Right cardiac atrium (tissue), 5 donors: ENCODE measurements at regions of chr10 and their contacts with region 1.

Region 1: DNA sequence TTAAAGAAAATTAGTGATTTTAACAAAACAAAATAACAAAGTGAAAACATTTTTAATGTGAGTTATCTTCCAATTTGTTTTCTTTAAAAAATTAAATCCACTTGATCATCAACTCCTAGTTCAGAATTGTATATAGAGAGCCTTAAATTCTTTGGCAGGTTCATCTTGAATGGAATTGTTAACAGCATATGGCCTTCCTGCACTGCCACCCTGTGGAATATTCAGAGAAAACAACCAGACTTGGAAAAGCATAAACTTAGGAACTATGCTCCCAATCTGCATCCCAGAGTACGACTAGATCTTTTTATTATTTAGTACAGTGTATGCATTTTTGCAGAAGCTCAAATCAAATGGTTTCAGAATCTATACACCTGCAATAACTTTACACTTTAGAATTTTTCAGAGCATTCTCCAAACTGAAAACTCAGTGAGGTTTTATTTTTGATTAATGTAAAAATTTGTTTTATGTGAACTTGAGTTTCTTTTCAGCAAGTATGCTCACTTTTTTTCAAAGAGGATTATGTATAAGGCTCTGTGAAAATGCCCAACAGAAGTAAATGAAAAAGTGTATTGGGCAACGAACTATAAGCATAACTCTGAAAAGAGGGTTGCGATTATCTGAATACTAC is 44.9 kb upstream of the ANK3 start:
- DNase-seq: no peak
- ATAC-seq: peak; percentile 67 to 72
- H3K4me3 ChIP-seq: no peak overlapping the region
- H3K27ac ChIP-seq: no peak overlapping the region
- H3K4me1 ChIP-seq: no peaks in the 10 kb centered on the region
- H3K27me3 ChIP-seq: no peaks in the 10 kb centered on the region

Region 2: GRCh38 chr10:60099998-60100747 is 334.4 kb before region 1 on chr10:
- intact Hi-C with region 1: loop called in 3 of 4 experiments (anchors 5 to 10 kb)
- DNase-seq: no peak
- ATAC-seq: peak; percentile 55 to 66
- H3K4me3 ChIP-seq: no peak overlapping the region
- H3K27ac ChIP-seq: no peak overlapping the region
- H3K4me1 ChIP-seq: no peaks in the 10 kb centered on the region
- H3K27me3 ChIP-seq: no peaks in the 10 kb centered on the region

Region 3: DNA sequence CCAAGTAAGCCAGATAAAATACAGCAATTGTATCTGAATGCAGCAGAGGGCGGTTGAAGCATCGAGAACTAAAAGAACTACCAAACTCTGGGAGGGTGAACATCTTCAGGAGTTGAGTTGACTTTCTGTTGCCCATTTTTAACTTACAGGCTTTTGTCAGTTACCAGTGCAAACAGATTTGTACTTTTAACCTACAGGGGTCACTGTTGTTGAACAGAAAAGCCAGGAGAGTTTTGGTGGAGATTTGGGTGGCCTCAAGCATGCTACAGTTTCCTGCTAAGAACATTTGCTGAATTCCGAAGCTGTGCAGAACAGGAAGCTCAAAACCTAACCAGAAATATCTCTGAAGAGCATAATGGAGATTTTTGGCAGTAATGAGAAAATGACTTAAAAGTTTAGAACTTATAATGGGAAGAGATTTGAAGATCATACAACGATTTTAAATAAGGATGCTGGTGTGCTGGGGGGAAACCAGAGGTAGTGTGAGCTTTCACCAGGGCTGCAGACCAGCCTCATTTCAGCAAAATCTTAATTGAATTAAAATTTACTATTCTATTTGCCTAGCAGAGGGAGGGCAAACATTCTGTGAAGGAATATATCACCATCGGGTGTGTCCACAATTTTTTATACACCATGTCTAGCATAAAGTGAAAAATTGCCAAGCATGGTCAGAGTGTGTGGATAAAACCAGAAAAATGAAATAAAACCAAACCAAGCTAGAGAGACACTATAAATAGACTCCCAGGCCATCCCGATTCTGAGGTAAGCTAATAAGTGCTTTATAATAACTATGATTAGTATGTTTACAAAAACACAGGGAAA is 319.6 kb before region 1 on chr10:
- intact Hi-C with region 1: loop called in 1 of 4 experiments (anchors 10 kb)
- DNase-seq: no peak
- ATAC-seq: peak; percentile 53 to 75
- H3K4me3 ChIP-seq: no peak overlapping the region
- H3K27ac ChIP-seq: no peak overlapping the region
- H3K4me1 ChIP-seq: no peaks in the 10 kb centered on the region
- H3K27me3 ChIP-seq: no peaks in the 10 kb centered on the region

Region 4: GRCh38 chr10:60208676-60209269 is 225.8 kb before region 1 on chr10:
- intact Hi-C with region 1: loop called (anchors 10 kb)
- DNase-seq: no peak
- ATAC-seq: peak in 1 of 2 donors; percentile 35
- H3K4me3 ChIP-seq: no peak overlapping the region
- H3K27ac ChIP-seq: no peak overlapping the region
- H3K4me1 ChIP-seq: no peaks in the 10 kb centered on the region
- H3K27me3 ChIP-seq: no peaks in the 10 kb centered on the region

Region 5: GRCh38 chr10:60237977-60238758 is 196.4 kb before region 1 on chr10:
- intact Hi-C with region 1: loop called in 1 of 4 experiments (anchors 10 kb)
- DNase-seq: no peak
- ATAC-seq: peak; percentile 68 to 77
- H3K4me3 ChIP-seq: no peak overlapping the region
- H3K27ac ChIP-seq: peak overlapping the region; percentile 54
- H3K4me1 ChIP-seq: peaks cover 5% of the 10 kb centered on the region
- H3K27me3 ChIP-seq: no peaks in the 10 kb centered on the region

Region 6: GRCh38 chr10:60611291-60611747 is 176.8 kb after region 1 on chr10:
- intact Hi-C with region 1: no loop called
- DNase-seq: no peak
- ATAC-seq: no peak
- H3K4me3 ChIP-seq: no peak overlapping the region
- H3K27ac ChIP-seq: no peak overlapping the region
- H3K4me1 ChIP-seq: no peaks in the 10 kb centered on the region
- H3K27me3 ChIP-seq: no peaks in the 10 kb centered on the region